Vagina (tissue), 2 donors: ENCODE measurements at regions of chr5 and their contacts with region 1.

Region 1: GRCh38 chr5:134184155-134185135 is 7.7 kb upstream of the SKP1 start:
- DNase-seq: no peak
- H3K4me3 ChIP-seq: no peak overlapping the region
- H3K27ac ChIP-seq: no peak overlapping the region
- H3K4me1 ChIP-seq: no peaks in the 10 kb centered on the region
- H3K27me3 ChIP-seq: no peaks in the 10 kb centered on the region
- CTCF ChIP-seq: peak; percentile 57 to 92 (median 89)
- POLR2A ChIP-seq: no peak

Region 2: GRCh38 chr5:134289509-134290113 is 105.2 kb after region 1 on chr5:
- intact Hi-C with region 1: loop called (anchors 5 kb)
- DNase-seq: no peak
- H3K4me3 ChIP-seq: no peak overlapping the region
- H3K27ac ChIP-seq: no peak overlapping the region
- H3K4me1 ChIP-seq: no peaks in the 10 kb centered on the region
- H3K27me3 ChIP-seq: no peaks in the 10 kb centered on the region
- CTCF ChIP-seq: peak; percentile 69 to 87 (median 83)
- POLR2A ChIP-seq: no peak

Region 3: DNA sequence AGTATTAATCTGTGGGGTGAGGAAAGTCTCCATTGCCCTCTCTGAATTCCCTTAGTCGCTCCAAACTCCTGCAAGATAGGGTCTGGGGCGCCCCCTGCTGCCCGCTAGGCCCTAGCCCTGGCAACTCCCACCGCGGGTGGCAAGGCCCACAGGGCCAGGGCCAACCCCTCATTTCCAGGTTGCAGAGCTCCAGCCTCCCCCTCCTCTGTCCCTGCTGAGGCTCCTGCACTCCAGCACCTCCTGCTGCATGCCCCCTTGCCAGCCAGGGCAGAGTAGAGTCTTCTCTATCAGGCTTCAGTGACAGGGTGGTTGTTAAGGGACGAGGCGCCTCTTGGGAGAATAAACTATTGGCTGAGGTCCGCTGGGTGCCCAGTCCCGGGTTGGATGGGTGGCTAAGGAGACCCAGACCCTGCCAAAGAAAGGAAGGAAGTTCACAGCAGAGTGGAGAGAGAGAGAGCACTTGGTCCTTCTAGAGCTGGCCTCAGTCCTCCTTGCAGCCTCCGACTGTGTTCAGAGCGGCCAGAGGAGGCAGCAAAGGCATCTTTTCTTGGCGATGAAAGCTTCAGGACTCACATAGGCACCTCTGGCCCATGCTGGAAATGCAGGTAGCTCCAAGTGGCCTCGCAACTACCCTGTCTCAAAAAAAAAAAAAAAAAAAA is 402.6 kb after region 1 on chr5:
- intact Hi-C with region 1: loop called (anchors 10 kb)
- DNase-seq: no peak
- H3K4me3 ChIP-seq: no peak overlapping the region
- H3K27ac ChIP-seq: no peak overlapping the region
- H3K4me1 ChIP-seq: peaks cover 17% of the 10 kb centered on the region
- H3K27me3 ChIP-seq: no peaks in the 10 kb centered on the region
- CTCF ChIP-seq: peak; percentile 59 to 78 (median 71)
- POLR2A ChIP-seq: no peak

Region 4: DNA sequence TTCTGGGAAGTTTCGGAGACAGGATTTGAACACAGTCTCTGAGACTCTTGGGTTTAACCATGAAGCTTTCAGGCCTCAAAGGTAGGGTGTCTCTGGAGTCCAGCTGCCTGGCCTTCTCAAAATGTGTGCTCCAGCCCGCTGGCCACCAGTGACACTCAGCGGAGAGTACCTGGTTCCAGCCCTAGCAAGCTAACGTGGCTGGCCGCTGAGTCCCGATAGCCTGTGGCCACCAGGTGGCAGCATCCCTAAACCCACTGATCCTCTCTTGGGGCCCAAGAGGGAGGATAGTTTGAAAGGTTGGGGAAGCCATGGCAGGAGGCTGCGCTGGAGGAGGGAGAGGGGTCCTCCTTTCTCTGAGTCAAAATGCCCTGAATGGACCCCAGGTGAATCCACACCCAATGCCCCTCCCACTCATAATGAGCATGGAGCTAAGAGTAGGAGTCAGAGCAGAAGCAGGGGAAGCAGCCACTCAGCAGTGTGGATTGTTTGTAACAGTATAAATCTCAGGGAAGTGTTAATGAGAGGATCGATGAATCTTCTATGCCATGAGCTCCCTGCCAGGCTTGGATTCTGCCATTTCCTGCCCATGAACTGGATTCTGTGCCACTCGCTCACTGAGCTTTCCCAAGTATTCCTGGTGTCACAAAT is 1273.1 kb after region 1 on chr5:
- intact Hi-C with region 1: no loop called
- DNase-seq: no peak
- H3K4me3 ChIP-seq: no peak overlapping the region
- H3K27ac ChIP-seq: no peak overlapping the region
- H3K4me1 ChIP-seq: peaks cover 6% of the 10 kb centered on the region
- H3K27me3 ChIP-seq: no peaks in the 10 kb centered on the region
- CTCF ChIP-seq: peak in 2 of 3 experiments; percentile 31 to 42
- POLR2A ChIP-seq: no peak